Activated CD8-positive, alpha-beta T cell treated with anti-CD3 and anti-CD28 coated beads, Interleukin-2, amount 10 ng/mL, durations not matched to agents 7 days and 5 days (primary cell): ENCODE measurements at regions of chr19 and their contacts with region 1.

Region 1: GRCh38 chr19:39563408-39563807 is 23.4 kb upstream of the EID2 start:
- DNase-seq: no peak
- ATAC-seq: no peak
- H3K4me3 Mint-ChIP-seq: no peak overlapping the region
- H3K27ac Mint-ChIP-seq: no peak overlapping the region
- H3K4me1 Mint-ChIP-seq: peaks cover 11% of the 10 kb centered on the region
- H3K27me3 Mint-ChIP-seq: peaks cover 11% of the 10 kb centered on the region

Region 2: GRCh38 chr19:39514840-39515550 is 48.4 kb before region 1 on chr19 and contains the start of gene SELENOV:
- CTCF ChIA-PET with region 1: no interaction called
- POLR2A ChIA-PET with region 1: no interaction called
- DNase-seq: no peak
- ATAC-seq: peak; percentile 57
- H3K4me3 Mint-ChIP-seq: peak within 1 kb of the TSS; percentile 32
- H3K27ac Mint-ChIP-seq: no peak within 1 kb of the TSS
- H3K4me1 Mint-ChIP-seq: peaks cover 15% of the 10 kb centered on the region
- H3K27me3 Mint-ChIP-seq: peaks cover 42% of the 10 kb centered on the region
- total RNA-seq, gene SELENOV: not detected

Region 3: DNA sequence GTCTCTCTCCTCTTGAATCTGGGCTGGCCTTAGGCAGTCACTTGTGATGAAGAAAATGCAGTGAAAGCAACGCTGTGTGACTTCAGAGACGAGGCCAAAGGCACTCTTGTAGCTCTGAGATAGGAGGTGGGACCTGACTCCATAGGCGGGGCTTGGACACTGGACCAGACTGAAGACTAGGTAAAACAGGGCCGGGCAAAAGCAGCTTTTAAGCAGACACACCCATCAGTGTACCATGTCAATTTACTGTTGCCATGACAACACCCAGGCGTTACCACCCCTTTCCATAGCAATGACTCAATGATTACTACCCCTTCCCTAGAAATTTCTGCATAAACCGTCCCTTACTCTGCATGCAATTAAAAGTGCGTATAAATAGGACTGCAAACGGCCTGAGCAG is 16.8 kb before region 1 on chr19:
- CTCF ChIA-PET with region 1: interaction called, 21 read pairs
- POLR2A ChIA-PET with region 1: no interaction called
- DNase-seq: no peak
- ATAC-seq: no peak
- H3K4me3 Mint-ChIP-seq: no peak overlapping the region
- H3K27ac Mint-ChIP-seq: no peak overlapping the region
- H3K4me1 Mint-ChIP-seq: peaks cover 46% of the 10 kb centered on the region
- H3K27me3 Mint-ChIP-seq: no peaks in the 10 kb centered on the region

Region 4: GRCh38 chr19:39631178-39631577 is 67.8 kb after region 1 on chr19:
- CTCF ChIA-PET with region 1: no interaction called
- POLR2A ChIA-PET with region 1: no interaction called
- DNase-seq: no peak
- ATAC-seq: no peak
- H3K4me3 Mint-ChIP-seq: no peak overlapping the region
- H3K27ac Mint-ChIP-seq: no peak overlapping the region
- H3K4me1 Mint-ChIP-seq: no peaks in the 10 kb centered on the region
- H3K27me3 Mint-ChIP-seq: peaks cover 17% of the 10 kb centered on the region